Spleen (tissue), 13 donors: ENCODE measurements at regions of chr4 and their contacts with region 1.

Region 1: DNA sequence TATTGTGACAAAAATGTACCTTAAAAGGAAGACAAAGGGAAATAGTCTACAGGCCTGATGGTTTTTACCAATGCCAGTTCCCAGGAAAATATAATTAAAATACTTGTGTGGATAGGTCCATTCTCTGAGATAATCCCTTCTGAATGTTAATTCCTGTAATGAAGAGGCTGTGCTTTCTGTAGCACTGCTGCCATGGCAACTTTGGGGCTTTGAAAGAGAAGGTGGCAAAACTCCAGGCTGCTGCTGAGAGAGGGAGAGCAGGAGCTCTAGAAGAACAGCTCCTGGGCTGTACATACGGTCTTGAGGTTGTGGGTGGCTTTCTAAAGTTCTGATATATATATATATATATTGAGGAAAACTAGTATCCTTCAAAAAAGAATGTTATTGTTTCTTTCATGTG is 125.4 kb downstream of the PDLIM5 start:
- DNase-seq: no peak
- H3K4me3 ChIP-seq: no peak overlapping the region
- H3K27ac ChIP-seq: no peak overlapping the region
- H3K4me1 ChIP-seq: peaks cover 0 to 16% (median 0%) of the 10 kb centered on the region in 6 donors
- H3K27me3 ChIP-seq: no peaks in the 10 kb centered on the region
- CTCF ChIP-seq: no peak
- POLR2A ChIP-seq: no peak

Region 2: GRCh38 chr4:94463771-94464170 is 113.4 kb before region 1 on chr4:
- intact Hi-C with region 1: loop called (anchors 10 kb)
- DNase-seq: no peak
- H3K4me3 ChIP-seq: no peak overlapping the region
- H3K27ac ChIP-seq: no peak overlapping the region
- H3K4me1 ChIP-seq: peaks cover 0 to 17% (median 6%) of the 10 kb centered on the region in 6 donors
- H3K27me3 ChIP-seq: no peaks in the 10 kb centered on the region
- CTCF ChIP-seq: no peak
- POLR2A ChIP-seq: no peak